ENCODE measurements at regions of chr10 and their contacts with region 1.

Region 1: GRCh38 chr10:90862908-90863514 is 5.2 kb upstream of the HTR7 start:
- DNase-seq: no peak
- ATAC-seq: no peak
- H3K4me3 ChIP-seq: no peak overlapping the region
- H3K27ac ChIP-seq: no peak overlapping the region
- H3K4me1 ChIP-seq: no peaks in the 10 kb centered on the region
- H3K27me3 ChIP-seq: no peaks in the 10 kb centered on the region

Region 2: DNA sequence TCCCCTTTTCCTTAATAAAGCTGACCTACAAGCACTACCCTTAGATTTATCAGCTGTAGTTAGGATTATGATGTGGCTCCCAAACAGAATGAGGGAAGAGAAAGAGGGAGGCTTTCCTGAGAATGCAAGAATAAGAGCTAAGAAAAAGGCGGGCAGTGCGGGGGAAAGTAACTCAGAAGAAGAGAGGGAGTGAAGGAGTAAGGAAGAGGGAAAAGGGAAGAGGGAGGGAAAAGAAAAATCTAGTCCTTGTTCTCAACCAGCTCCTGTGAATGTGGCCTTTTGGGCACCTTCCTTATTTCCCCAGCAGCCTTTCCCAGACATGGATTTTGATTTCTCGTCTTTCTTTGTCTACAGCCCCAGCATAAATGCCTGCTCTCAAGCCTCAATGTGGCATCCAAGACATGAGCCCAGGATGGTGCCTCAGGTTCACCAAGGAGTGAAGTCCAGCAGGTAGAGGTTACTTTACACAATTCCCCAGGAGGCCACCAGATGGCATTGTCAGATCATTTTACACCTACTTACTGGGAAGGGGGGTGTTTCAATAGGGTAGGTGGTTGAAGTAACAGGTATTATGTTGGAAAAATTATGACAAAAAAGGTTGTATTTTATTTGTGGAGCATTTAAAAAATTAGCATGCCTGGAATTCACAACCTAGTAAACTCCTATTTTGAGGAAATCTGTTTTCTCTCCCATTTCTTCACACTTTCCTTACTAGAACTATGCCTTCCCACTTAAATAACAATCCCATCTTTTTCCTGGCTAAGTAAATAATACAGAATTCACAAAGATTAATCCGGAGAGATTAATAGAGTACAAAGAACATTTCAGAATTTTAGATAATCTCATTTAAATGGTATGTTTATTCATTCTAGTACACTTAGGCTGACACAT is 111.7 kb before region 1 on chr10:
- intact Hi-C with region 1: loop called (anchors 2 to 5 kb)
- DNase-seq: no peak
- ATAC-seq: no peak
- H3K4me3 ChIP-seq: no peak overlapping the region
- H3K27ac ChIP-seq: no peak overlapping the region
- H3K4me1 ChIP-seq: no peaks in the 10 kb centered on the region
- H3K27me3 ChIP-seq: no peaks in the 10 kb centered on the region

Measured in aorta (tissue), 5 donors.